ENCODE measurements at regions of chr6 and their contacts with region 1.

Region 1: GRCh38 chr6:72411872-72412708 is 209.8 kb upstream of the KCNQ5 start:
- DNase-seq: peak; percentile 51 to 68
- H3K4me3 ChIP-seq: no peak overlapping the region
- H3K4me1 ChIP-seq: no peaks in the 10 kb centered on the region
- H3K27me3 ChIP-seq: no peaks in the 10 kb centered on the region; the same call in 1 of the 2 replicates

Region 2: DNA sequence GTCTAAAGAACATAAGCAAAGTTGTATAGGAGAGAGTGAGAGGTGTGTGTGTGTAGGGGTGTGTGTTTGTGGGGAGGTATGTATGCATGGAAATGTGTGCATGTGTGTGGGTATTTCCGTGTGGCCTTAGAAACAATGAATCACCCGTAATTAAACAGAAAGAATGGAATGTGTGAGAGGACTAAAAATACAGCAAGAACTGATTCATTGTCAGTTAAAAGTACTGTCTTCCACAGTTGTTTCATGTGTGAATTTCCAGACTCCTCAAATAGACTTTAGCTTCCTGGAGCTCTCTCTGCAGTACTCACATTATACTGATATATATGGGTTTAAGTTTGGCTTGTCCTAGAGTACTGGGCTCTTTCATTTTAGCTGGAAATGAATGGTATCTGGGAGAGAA is 380.0 kb before region 1 on chr6:
- in situ Hi-C with region 1: no loop called
- DNase-seq: no peak
- H3K4me3 ChIP-seq: no peak overlapping the region
- H3K4me1 ChIP-seq: no peaks in the 10 kb centered on the region
- H3K27me3 ChIP-seq: 0 out of 2 replicates have a peak, but pooled peaks cover 2% of the 10 kb centered on the region

Region 3: GRCh38 chr6:72619883-72620696 is 208.0 kb after region 1 on chr6:
- in situ Hi-C with region 1: no loop called
- DNase-seq: no peak
- H3K4me3 ChIP-seq: no peak overlapping the region
- H3K4me1 ChIP-seq: no peaks in the 10 kb centered on the region
- H3K27me3 ChIP-seq: peaks cover 46% of the 10 kb centered on the region

Region 4: DNA sequence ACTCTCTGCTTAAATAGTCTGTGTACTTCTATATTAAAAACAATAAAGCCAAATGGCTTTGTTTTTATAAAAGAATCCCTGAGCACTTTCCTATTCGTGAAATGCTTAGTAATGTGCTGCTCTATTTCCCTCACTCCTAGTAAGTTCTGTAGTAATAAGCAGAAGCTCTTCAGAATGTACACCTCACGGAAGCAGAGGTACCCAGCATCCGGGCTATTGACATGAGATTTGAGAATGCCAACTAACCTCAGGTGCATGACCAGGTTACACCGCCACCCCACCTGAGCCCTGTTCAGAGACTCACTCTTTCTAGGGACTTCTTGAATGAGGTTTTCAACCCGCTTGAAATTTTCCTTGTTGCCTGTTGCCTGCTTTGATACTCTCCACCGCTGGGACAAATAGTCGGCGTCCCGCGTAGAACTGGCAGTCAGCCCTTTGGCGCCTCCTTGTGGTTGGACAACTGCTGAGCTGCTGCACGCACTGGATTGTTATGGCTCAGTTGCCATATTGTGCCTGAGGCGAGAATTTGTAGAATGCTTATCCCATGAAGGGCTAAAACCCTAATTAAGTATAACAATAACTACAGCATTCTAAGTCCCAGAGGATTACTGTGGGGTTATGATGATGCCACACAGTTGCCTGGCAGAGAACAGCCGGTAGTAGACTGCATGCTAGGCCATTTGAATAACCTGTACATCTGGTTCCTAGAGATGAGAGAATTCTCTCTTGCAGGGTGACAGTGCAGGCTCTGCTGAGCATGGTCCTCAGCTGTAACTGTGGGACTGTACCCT is 717.8 kb after region 1 on chr6:
- in situ Hi-C with region 1: loop called (anchors 10 kb)
- DNase-seq: peak; percentile 88 to 94
- H3K4me3 ChIP-seq: no peak overlapping the region
- H3K4me1 ChIP-seq: no peaks in the 10 kb centered on the region
- H3K27me3 ChIP-seq: peaks cover 17% of the 10 kb centered on the region

Region 5: DNA sequence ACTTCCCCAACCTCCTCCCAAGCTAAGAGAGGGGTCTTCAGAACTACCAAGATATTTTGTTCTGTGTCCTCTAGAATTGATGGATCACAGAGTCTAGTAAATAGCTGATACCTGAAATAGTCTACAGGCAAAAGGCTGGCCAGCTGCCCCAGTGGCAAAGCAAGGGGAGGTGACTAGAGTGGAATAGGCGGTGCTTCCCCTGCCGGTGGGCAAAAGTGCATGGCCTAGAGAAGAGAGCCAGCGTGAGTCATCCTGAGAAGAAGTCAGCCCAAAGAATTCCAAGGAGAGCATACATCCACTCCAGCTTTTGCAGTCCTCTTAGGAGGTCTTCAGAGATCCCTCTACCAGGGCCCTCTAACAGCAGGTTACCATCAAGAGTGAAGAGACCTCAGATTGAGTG is 927.3 kb after region 1 on chr6:
- in situ Hi-C with region 1: loop called (anchors 25 kb)
- DNase-seq: no peak
- H3K4me3 ChIP-seq: no peak overlapping the region
- H3K4me1 ChIP-seq: no peaks in the 10 kb centered on the region
- H3K27me3 ChIP-seq: peaks cover 80% of the 10 kb centered on the region